WTC11 (cell line): ENCODE measurements at regions of chr16 and their contacts with region 1.

Region 1: DNA sequence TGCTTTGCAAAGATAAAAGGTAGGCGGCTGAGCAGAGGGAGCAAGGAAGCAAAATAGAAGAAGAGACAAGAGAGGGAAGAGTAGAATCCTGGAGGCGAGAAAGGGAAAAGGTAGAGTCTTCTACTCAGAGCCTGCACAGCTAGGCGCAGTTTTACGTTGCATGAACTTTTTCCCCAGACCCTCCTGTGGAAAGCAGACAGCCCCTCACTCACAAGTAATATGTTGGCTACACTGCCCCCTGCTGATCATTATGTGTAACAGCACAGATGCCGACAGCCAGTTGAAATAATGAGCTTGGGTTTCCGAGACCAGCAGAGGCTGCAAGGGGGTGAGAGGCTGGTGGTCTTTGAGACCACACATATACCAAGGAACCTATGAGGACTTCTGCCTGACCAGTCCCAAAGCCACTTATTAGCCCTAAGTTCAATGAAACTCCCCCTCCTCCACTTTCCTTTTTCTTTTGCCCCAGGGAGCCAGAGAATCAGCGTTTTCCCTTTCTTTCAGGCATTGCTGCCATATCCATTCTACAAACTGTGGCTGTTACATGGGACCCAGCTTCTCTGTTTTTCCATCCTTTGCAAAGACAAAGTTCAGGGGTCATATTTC is 22.5 kb upstream of the CMTR2 start:
- DNase-seq: peak; percentile 62
- ATAC-seq: peak; percentile 85
- H3K4me3 Mint-ChIP-seq: no peak overlapping the region
- H3K27ac Mint-ChIP-seq: no peak overlapping the region
- H3K4me1 Mint-ChIP-seq: peaks cover 9% of the 10 kb centered on the region
- H3K27me3 Mint-ChIP-seq: peaks cover 6% of the 10 kb centered on the region
- CTCF ChIP-seq: peak; percentile 84

Region 2: DNA sequence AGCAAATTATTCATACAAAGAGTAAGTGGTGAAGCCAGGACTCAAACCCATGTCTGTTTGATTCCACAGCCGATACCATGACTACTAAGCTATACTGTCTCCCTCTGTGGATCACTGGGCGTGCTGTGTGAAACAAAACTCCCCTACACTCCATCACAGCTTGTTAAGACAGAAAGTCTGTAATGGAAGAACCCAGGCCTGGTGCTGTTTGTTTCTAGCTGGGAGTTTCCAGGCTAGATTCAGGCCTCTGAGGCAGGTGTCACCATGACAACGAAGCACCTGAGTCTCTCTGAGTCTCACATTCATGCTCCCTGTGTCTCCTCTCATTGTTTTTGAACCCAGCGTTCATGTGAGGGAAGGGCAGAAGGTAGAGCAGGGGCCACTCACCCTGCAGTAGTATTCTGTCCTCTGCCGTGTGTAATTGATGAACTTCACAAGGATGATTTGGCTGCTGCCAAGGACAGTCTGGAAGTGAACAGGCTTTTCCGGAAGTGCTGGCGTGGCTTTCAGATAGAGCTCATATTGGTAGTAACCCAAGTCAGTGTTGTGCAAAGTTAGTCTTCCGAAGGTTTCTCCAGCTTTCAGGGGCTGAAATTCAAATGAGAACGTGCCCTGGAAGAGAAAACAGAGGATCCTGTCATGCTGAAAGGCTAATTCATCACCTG is 502.1 kb before region 1 on chr16:
- CTCF ChIA-PET with region 1: interaction called, 10 read pairs
- POLR2A ChIA-PET with region 1: no interaction called
- DNase-seq: no peak
- ATAC-seq: no peak
- H3K4me3 Mint-ChIP-seq: no peak overlapping the region
- H3K27ac Mint-ChIP-seq: no peak overlapping the region
- H3K4me1 Mint-ChIP-seq: no peaks in the 10 kb centered on the region
- H3K27me3 Mint-ChIP-seq: peaks cover 52% of the 10 kb centered on the region
- CTCF ChIP-seq: no peak

Region 3: GRCh38 chr16:71288890-71289733 is 22.5 kb before region 1 on chr16 and contains the start of gene CMTR2:
- CTCF ChIA-PET with region 1: interaction called, 12 read pairs
- POLR2A ChIA-PET with region 1: no interaction called
- DNase-seq: peak; percentile 96
- ATAC-seq: peak; percentile 97
- H3K4me3 Mint-ChIP-seq: peak within 1 kb of the TSS; percentile 71
- H3K27ac Mint-ChIP-seq: peak within 1 kb of the TSS; percentile 77
- H3K4me1 Mint-ChIP-seq: peaks cover 15% of the 10 kb centered on the region
- H3K27me3 Mint-ChIP-seq: peaks cover 8% of the 10 kb centered on the region
- CTCF ChIP-seq: no peak
- total RNA-seq, gene CMTR2: 8.7 to 13.4 TPM (median 10.9 TPM) in 3 replicates

Region 4: DNA sequence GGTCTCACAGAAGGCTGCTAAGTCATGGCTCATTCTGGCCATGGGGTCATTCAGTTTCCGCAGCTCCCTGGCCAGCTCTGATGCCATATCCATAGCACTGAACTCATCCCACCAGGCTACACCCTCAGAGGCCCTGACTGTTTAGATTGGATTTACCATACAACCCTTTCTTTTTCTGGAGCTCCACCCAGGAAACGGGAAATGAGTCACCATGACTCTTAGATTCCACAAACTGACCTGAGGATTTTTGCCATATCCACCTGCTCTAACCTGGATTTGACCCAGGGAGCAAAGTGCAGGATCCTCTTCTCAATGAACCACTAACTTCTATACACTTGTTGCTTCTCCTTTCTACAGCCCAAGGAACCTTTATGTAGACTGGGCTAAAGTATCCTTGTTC is 26.5 kb after region 1 on chr16:
- CTCF ChIA-PET with region 1: interaction called, 15 read pairs
- POLR2A ChIA-PET with region 1: no interaction called
- DNase-seq: no peak
- ATAC-seq: no peak
- H3K4me3 Mint-ChIP-seq: no peak overlapping the region
- H3K27ac Mint-ChIP-seq: no peak overlapping the region
- H3K4me1 Mint-ChIP-seq: no peaks in the 10 kb centered on the region
- H3K27me3 Mint-ChIP-seq: peaks cover 4% of the 10 kb centered on the region
- CTCF ChIP-seq: no peak

Region 5: DNA sequence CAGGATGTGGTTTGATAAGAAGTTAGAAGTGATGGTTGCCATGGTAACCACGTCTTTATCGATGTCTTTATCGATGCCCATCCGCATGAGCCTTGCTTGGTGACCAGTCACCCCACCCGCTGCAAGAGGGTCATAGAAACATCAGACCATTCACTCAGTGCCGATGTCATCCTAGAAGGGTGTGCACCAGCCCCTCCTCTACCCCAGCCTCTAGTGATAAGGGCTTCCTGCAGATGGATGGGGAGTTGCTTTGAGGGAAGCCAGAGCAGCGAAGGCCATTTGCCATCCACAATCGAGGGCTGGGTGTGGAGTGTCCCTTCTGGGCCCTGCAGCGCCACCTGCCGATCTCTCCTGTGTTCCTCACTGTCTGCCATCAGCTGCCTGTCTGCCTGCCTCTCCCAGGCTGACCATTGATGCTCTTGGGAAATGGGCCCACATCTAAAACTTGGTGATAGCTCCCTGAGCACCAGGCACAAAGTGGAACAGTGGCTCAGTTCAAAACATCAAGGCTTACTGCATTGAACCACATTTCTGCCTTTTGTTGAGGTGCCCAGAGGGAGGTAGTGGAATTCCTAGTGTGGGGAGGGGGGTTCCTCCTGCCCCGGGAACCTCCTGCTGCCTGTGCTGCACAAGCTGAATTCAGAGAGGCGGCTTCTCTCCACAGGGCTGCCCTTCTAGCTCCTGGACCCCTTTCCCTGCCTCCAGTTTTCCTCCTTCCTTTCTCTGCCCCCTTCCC is 55.8 kb after region 1 on chr16:
- CTCF ChIA-PET with region 1: interaction called, 10 read pairs
- POLR2A ChIA-PET with region 1: no interaction called
- DNase-seq: peak; percentile 92
- ATAC-seq: peak; percentile 99
- H3K4me3 Mint-ChIP-seq: no peak overlapping the region
- H3K27ac Mint-ChIP-seq: no peak overlapping the region
- H3K4me1 Mint-ChIP-seq: no peaks in the 10 kb centered on the region
- H3K27me3 Mint-ChIP-seq: peaks cover 4% of the 10 kb centered on the region; the same call in 1 of the 2 replicates
- CTCF ChIP-seq: peak; percentile 80